Pancreas (tissue), 10 donors: ENCODE measurements at regions of chr5 and their contacts with region 1.

Region 1: GRCh38 chr5:179613460-179614071 is 9.9 kb downstream of the HNRNPH1 start:
- DNase-seq: peak in 1 of 6 donors; percentile 29
- ATAC-seq: no peak
- H3K4me3 ChIP-seq: no peak overlapping the region
- H3K27ac ChIP-seq: no peak overlapping the region
- H3K4me1 ChIP-seq: peaks cover 11 to 29% (median 18%) of the 10 kb centered on the region in 3 donors
- H3K27me3 ChIP-seq: no peaks in the 10 kb centered on the region
- CTCF ChIP-seq: no peak

Region 2: GRCh38 chr5:179371681-179372680 is 241.6 kb before region 1 on chr5:
- intact Hi-C with region 1: no loop called
- DNase-seq: peak in 4 of 6 donors; percentile 12 to 51 (median 29)
- ATAC-seq: peak in 3 of 4 donors; percentile 43 to 86 (median 79)
- H3K4me3 ChIP-seq: no peak overlapping the region
- H3K27ac ChIP-seq: no peak overlapping the region
- H3K4me1 ChIP-seq: no peaks in the 10 kb centered on the region
- H3K27me3 ChIP-seq: no peaks in the 10 kb centered on the region
- CTCF ChIP-seq: no peak

Region 3: GRCh38 chr5:179720222-179720621 is 106.7 kb after region 1 on chr5:
- intact Hi-C with region 1: loop called in 1 of 3 experiments (anchors 10 kb)
- DNase-seq: no peak
- ATAC-seq: no peak
- H3K4me3 ChIP-seq: no peak overlapping the region
- H3K27ac ChIP-seq: no peak overlapping the region
- H3K4me1 ChIP-seq: no peaks in the 10 kb centered on the region
- H3K27me3 ChIP-seq: no peaks in the 10 kb centered on the region
- CTCF ChIP-seq: no peak

Region 4: DNA sequence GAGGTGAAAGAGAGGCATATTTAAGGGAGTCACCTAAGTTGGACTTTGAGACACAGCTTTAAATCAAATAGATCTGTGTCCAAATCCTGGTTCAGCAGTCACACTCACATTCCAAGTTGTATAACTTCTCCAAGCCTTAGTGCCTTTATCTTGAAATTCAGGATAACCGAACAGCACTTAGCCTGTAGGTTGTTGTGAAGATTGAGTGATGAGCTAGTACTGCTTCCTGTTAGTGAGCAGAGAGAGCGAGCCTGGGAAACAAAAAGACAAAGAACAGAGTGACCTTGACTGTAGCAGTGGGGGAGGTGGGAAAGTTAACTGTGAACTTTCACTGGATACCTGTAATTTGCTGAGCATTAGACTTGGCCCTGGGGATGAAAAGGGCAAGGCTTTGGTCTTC is 141.5 kb after region 1 on chr5:
- intact Hi-C with region 1: no loop called
- DNase-seq: no peak
- ATAC-seq: peak; percentile 61 to 85 (median 81)
- H3K4me3 ChIP-seq: no peak overlapping the region
- H3K27ac ChIP-seq: peak overlapping the region in 2 of 4 donors; percentile 25 to 35
- H3K4me1 ChIP-seq: peaks cover 10 to 20% (median 13%) of the 10 kb centered on the region in 3 donors
- H3K27me3 ChIP-seq: no peaks in the 10 kb centered on the region
- CTCF ChIP-seq: no peak